Head of caudate nucleus (tissue), 42 donors: ENCODE measurements at regions of chr2 and their contacts with region 1.

Region 1: GRCh38 chr2:178796079-178796677 is 11.0 kb downstream of the TTN start:
- DNase-seq: no peak

Region 2: GRCh38 chr2:178914259-178914849 is 118.2 kb after region 1 on chr2:
- intact Hi-C with region 1: loop called (anchors 10 kb)
- DNase-seq: peak; percentile 55 to 94 (median 85)